Heart left ventricle (tissue), 16 donors: ENCODE measurements at regions of chr5 and their contacts with region 1.

Region 1: DNA sequence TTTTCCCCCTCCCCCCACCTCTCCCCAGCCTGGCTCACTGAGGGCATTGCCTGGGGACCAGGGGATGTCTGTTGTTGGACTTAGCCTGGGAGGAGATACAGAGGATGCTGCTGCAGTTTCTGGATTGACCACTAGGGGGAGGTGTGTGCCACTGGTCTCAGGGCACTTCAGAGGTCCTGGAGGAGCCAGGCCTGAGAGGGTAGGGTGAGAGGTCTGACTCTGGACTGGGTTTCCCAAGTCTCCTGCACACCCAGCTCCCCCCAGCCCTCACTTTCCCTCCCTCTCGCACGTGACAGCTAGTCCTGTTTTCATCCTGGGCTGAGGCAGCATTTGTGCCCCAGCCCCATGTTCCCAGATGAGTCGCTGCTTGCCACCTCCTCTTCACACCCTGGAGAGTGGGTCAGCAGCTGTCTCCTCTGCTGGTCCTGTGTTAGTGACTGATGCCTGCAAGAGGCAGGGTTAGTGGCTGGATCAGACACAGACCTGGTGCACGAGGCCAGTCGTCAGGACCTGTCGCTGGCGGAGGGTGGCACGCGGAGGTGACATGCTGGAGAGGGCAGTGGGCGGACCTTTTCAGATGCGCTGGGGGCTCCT is 4.4 kb downstream of the IL3 start:
- DNase-seq: peak; percentile 49 to 76 (median 64)
- ATAC-seq: peak; percentile 57 to 77 (median 71)
- H3K4me3 ChIP-seq: no peak overlapping the region
- H3K27ac ChIP-seq: no peak overlapping the region
- H3K4me1 ChIP-seq: no peaks in the 10 kb centered on the region
- H3K27me3 ChIP-seq: no peaks in the 10 kb centered on the region
- CTCF ChIP-seq: peak; percentile 73 to 95 (median 87)
- POLR2A ChIP-seq: no peak

Region 2: DNA sequence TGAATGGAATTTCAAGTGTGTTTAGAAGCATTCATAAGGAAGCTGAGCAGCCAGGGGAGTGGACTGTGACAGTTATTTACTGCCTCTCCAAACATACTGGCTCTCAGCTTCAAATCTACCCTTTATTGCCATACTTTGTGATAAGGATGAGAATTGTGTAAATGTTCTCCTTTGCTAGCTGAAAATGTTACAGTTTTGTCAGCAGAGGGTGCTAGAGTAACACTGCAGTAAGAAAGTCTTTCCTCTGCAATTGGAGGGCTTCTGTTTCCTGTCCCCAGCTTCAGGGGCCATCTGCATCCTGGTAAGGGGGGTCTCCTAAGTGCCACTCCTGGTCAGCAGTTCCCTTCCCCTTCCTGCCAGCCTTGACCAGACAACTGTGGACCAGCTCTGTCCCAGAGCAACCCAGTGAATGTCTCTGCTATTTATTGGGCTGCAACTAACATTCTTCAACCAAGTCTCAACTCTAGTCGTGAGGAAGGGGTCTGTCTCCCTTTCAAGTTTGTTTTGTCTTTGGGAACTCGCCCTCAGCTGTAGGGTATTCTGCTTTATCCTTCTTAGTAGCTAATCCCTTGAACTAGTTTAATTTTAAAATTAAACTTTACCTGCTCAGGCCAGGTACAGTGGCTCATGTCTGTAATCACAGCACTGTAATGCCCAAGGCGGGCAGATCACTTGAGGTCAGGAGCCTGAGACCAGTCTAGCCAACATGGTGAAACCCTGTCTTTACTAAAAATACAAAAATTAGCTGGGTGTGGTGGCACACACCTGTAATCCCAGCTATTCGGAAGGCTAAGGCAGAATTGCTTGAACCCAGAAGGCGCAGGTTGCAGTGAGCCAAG is 475.1 kb before region 1 on chr5:
- intact Hi-C with region 1: loop called (anchors 2 to 5 kb)
- DNase-seq: peak in 1 of 5 donors; percentile 25
- ATAC-seq: peak in 3 of 4 donors; percentile 63 to 68 (median 68)
- H3K4me3 ChIP-seq: no peak overlapping the region
- H3K27ac ChIP-seq: no peak overlapping the region
- H3K4me1 ChIP-seq: peaks cover 0 to 21% (median 17%) of the 10 kb centered on the region in 12 donors
- H3K27me3 ChIP-seq: no peaks in the 10 kb centered on the region
- CTCF ChIP-seq: peak; percentile 72 to 95 (median 85)
- POLR2A ChIP-seq: no peak

Region 3: DNA sequence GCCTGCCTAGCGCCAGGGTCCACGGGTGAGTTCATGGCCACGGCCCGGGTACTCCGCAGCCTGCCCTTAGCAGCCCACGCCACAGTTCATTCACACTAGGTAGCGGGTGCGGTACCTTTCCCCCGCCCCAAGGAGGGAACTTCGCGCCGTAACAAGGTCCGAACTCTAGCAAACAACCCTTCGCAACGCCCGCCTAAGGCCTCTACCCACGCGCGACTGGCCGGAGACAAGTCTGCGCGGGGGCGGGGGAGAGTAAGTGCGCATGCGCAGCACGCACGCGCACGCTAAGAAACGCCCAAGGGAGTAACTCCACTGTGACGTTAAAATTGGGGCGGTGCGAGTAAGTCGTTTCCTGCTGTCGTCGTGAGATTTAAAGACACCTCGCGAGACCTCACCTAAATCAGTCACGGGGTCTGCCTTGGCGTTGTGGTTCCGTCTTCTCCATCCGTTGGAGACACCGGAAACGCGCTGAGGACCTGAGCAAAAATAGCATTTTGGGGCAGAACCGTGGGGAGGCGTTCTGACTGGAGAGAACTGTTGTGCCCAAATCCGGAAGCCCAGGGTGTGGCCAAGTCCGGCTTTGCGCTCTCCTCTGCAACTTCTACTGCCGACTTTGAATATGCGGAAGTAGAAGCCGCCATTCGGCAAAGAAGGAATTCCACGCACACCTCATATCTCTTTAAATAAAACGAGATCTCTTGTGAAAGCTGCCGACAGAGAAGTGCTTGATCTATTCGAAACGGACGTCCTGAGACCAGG is 429.7 kb before region 1 on chr5 and contains the start of gene RAPGEF6:
- intact Hi-C with region 1: no loop called
- DNase-seq: peak; percentile 97 to 99 (median 99)
- ATAC-seq: peak; percentile 95 to 98 (median 96)
- H3K4me3 ChIP-seq: peak within 1 kb of the TSS; percentile 35 to 87 (median 70)
- H3K27ac ChIP-seq: peak within 1 kb of the TSS; percentile 93 to 100 (median 98)
- H3K4me1 ChIP-seq: peaks cover 0 to 48% (median 29%) of the 10 kb centered on the region in 12 donors
- H3K27me3 ChIP-seq: no peaks in the 10 kb centered on the region
- CTCF ChIP-seq: peak in 2 of 12 donors; percentile 15 to 16
- POLR2A ChIP-seq: peak in 1 of 2 donors; percentile 66
- total RNA-seq, gene RAPGEF6: 7.0 to 13.9 (median 10.0) TPM

Region 4: DNA sequence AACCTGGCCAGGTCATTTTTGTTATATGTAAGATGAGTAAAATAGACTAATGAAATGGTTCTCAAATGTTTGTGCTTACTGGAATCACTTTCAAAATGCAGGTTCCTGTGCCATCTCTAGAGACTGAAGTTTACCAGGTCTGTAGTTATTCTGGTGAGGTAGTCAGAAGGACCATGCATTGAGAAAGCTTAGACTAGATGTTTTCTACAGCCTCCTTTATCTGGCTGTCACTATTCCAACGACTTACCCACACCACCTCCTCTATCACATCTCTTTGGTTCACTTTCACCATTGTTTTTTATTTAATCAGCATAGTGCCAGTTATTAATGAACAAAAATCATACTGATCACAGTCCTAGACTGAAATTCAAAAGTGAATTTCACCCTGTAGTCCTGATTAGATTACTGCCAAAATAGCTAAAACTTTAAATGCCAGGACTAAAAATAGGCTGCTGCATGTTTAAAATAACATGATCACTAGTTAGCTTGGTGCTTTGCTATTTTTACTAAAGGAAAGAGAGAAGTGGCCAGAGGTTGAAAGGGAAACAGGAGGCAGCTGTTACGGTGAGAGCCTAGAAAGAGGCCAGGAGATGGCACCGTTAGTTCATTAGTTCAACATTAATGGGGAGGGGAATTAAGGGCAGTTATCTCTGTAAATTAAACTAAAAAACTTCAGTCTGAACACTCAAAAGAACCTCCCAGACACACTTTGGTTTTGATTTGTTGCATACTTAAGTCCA is 254.2 kb before region 1 on chr5:
- intact Hi-C with region 1: loop called in 2 of 10 experiments (anchors 5 kb)
- DNase-seq: peak in 2 of 5 donors; percentile 17 to 29
- ATAC-seq: peak; percentile 76 to 88 (median 88)
- H3K4me3 ChIP-seq: peak overlapping the region in 1 of 12 donors; percentile 6
- H3K27ac ChIP-seq: peak overlapping the region in 9 of 12 donors; percentile 38 to 84 (median 57)
- H3K4me1 ChIP-seq: peaks cover 0 to 21% (median 9%) of the 10 kb centered on the region in 12 donors
- H3K27me3 ChIP-seq: no peaks in the 10 kb centered on the region
- CTCF ChIP-seq: peak in 10 of 12 donors; percentile 12 to 54 (median 38)
- POLR2A ChIP-seq: no peak

Region 5: DNA sequence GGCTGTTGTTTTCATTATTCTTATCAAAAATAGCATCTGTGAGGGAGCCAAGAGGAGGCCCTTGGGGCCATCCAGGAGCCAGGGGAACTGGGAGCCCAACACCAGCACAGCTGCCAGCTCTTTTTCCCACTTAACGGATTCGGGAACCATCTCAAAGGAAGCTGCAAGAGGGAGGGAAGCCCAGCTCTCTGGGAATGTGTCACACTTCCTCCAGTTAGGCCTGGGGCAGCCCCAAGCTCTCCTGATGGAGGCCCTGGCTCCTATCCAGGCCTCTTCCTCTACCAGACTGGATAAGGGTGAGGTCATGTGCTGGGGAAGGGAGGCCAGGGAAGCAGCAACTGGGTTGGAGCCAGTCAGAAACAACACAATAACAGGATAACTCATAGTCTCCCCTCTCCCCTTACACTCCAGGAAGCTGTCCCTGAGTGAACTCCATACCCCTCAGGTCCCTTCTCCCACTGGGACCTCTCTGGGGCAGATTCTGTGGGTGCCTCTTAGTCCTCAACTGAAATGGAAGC is 21.5 kb after region 1 on chr5:
- intact Hi-C with region 1: no loop called
- DNase-seq: peak; percentile 82 to 88 (median 85)
- ATAC-seq: peak; percentile 68 to 97 (median 92)
- H3K4me3 ChIP-seq: no peak overlapping the region
- H3K27ac ChIP-seq: peak overlapping the region in 9 of 12 donors; percentile 11 to 78 (median 53)
- H3K4me1 ChIP-seq: peaks cover 0 to 29% (median 20%) of the 10 kb centered on the region in 12 donors
- H3K27me3 ChIP-seq: no peaks in the 10 kb centered on the region
- CTCF ChIP-seq: no peak
- POLR2A ChIP-seq: no peak

Region 6: GRCh38 chr5:132134384-132134783 is 69.5 kb after region 1 on chr5:
- intact Hi-C with region 1: loop called in 6 of 10 experiments (anchors 2 to 10 kb)
- DNase-seq: no peak
- ATAC-seq: no peak
- H3K4me3 ChIP-seq: no peak overlapping the region
- H3K27ac ChIP-seq: no peak overlapping the region
- H3K4me1 ChIP-seq: no peaks in the 10 kb centered on the region
- H3K27me3 ChIP-seq: no peaks in the 10 kb centered on the region
- CTCF ChIP-seq: peak in 3 of 12 donors; percentile 19 to 35 (median 26)
- POLR2A ChIP-seq: no peak

Region 7: GRCh38 chr5:132180134-132180745 is 115.4 kb after region 1 on chr5:
- intact Hi-C with region 1: loop called in 1 of 10 experiments (anchors 5 kb)
- DNase-seq: no peak
- ATAC-seq: peak in 2 of 4 donors; percentile 58 to 64
- H3K4me3 ChIP-seq: no peak overlapping the region
- H3K27ac ChIP-seq: no peak overlapping the region
- H3K4me1 ChIP-seq: peaks cover 0 to 18% (median 3%) of the 10 kb centered on the region in 12 donors
- H3K27me3 ChIP-seq: no peaks in the 10 kb centered on the region
- CTCF ChIP-seq: peak; percentile 53 to 81 (median 71)
- POLR2A ChIP-seq: no peak